Activated naive CD8-positive, alpha-beta T cell treated with anti-CD3 and anti-CD28 coated beads, Interleukin-2, amount 10 ng/mL, durations not matched to agents 7 days and 5 days (primary cell): ENCODE measurements at regions of chr10 and their contacts with region 1.

Region 1: GRCh38 chr10:114821293-114821914 is at the start of gene FHIP2A:
- DNase-seq: peak; percentile 97
- ATAC-seq: peak; percentile 93
- H3K4me3 Mint-ChIP-seq: peak within 1 kb of the TSS; percentile 92
- H3K27ac Mint-ChIP-seq: peak within 1 kb of the TSS; percentile 92
- H3K4me1 Mint-ChIP-seq: peaks cover 15% of the 10 kb centered on the region
- H3K27me3 Mint-ChIP-seq: peaks cover 22% of the 10 kb centered on the region
- total RNA-seq, gene FHIP2A: 26.4 to 29.7 TPM

Region 2: GRCh38 chr10:114703377-114704107 is 117.9 kb before region 1 on chr10:
- POLR2A ChIA-PET with region 1: no interaction called
- DNase-seq: no peak
- ATAC-seq: no peak
- H3K4me3 Mint-ChIP-seq: no peak overlapping the region
- H3K27ac Mint-ChIP-seq: no peak overlapping the region
- H3K4me1 Mint-ChIP-seq: no peaks in the 10 kb centered on the region
- H3K27me3 Mint-ChIP-seq: peaks cover 33% of the 10 kb centered on the region

Region 3: DNA sequence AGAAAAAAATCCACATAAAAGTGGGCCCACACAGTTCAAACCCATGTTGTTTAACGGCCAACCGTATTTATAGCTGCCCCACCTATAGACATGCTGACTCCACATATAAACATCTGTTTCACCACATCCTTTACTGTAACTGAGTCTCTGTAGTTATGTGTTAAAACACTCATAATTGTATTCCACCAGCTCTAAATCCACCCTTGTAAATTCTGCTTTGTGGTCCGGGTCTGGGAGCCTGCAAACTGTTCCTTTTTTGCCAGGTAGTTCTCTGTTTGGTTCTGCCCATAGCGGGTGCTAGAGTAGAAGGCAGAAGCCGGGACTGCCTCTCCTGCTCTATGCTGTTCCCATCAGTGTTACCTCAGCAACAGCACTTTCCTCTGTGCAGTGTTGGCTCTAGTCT is 20.0 kb before region 1 on chr10:
- POLR2A ChIA-PET with region 1: interaction called, 15 read pairs
- DNase-seq: peak; percentile 42
- ATAC-seq: peak; percentile 98
- H3K4me3 Mint-ChIP-seq: peak overlapping the region; percentile 70
- H3K27ac Mint-ChIP-seq: peak overlapping the region; percentile 84
- H3K4me1 Mint-ChIP-seq: peaks cover 17% of the 10 kb centered on the region
- H3K27me3 Mint-ChIP-seq: peaks cover 3% of the 10 kb centered on the region

Region 4: DNA sequence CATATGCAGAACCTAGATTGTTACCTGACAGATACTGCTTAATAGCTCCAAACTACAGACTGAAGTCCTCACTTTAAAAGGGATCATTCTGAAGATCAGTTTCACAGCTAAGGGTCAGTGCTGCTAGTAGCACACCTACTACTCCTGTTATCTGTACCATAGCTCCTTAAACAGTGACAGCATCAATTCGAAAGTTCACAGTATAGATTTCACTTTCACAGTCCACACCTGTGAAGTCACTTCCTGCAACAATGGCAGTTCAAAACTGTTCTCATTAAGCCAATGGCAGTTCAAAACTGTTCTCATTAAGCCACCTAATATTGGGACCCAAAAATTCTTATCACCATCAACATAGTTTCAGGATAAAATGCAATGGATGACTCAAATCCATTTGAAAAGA is 10.5 kb before region 1 on chr10:
- POLR2A ChIA-PET with region 1: interaction called, 23 read pairs
- DNase-seq: no peak
- ATAC-seq: peak; percentile 86
- H3K4me3 Mint-ChIP-seq: peak overlapping the region; percentile 67
- H3K27ac Mint-ChIP-seq: peak overlapping the region; percentile 83
- H3K4me1 Mint-ChIP-seq: peaks cover 17% of the 10 kb centered on the region
- H3K27me3 Mint-ChIP-seq: no peaks in the 10 kb centered on the region